Activated CD4-positive, alpha-beta T cell treated with anti-CD3 and anti-CD28 coated beads for 36 hours (primary cell): ENCODE measurements at regions of chr22 and their contacts with region 1.

Region 1: DNA sequence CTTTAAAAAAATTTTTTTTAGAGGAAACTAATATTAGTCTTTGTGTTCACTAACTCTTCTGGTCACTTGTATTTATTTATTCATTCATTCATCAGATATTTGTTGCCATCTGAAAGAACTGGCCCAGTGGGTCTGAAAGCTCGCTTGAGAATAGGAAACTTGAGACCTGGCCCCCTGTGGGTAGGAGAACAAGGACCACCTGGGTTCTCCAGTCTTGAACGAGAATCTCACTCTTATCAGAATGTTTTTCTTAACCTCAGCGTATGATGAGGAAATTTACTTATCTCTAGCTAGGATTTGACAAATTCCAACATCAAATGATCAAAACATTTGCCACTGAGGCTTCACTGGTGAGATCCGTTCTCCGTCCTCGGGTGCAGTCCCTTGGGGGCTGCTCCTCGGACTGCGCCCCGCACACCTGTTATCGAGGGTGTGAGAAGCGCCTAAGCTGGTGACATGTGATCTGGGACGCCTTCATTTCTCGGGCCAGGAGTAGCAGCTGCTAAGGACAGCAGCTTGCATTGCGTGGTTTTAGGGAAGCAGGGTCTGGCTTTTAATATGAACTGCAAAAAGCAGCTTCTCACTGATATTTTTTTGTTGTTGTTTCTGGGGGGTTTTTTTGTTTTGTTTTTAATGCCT is 6.3 kb downstream of the C22orf31 start:
- DNase-seq: no peak
- ATAC-seq: no peak
- H3K4me3 Mint-ChIP-seq: no peak overlapping the region
- H3K27ac Mint-ChIP-seq: no peak overlapping the region
- H3K4me1 Mint-ChIP-seq: no peaks in the 10 kb centered on the region
- H3K27me3 Mint-ChIP-seq: peaks cover 4% of the 10 kb centered on the region

Region 2: GRCh38 chr22:29040385-29041275 is 14.7 kb before region 1 on chr22:
- CTCF ChIA-PET with region 1: interaction called, 21 read pairs
- POLR2A ChIA-PET with region 1: no interaction called
- intact Hi-C with region 1: no loop called
- DNase-seq: peak; percentile 77
- ATAC-seq: peak; percentile 65
- H3K4me3 Mint-ChIP-seq: no peak overlapping the region
- H3K27ac Mint-ChIP-seq: no peak overlapping the region
- H3K4me1 Mint-ChIP-seq: no peaks in the 10 kb centered on the region
- H3K27me3 Mint-ChIP-seq: peaks cover 7% of the 10 kb centered on the region